T-cell (primary cell): ENCODE measurements at regions of chr11 and their contacts with region 1.

Region 1: GRCh38 chr11:96389720-96390487 is at the starts of genes CCDC82 and JRKL:
- DNase-seq: peak; percentile 94 to 99 (median 97)
- ATAC-seq: peak; percentile 94 to 99 (median 97)
- H3K4me3 ChIP-seq: peak within 1 kb of the TSS; percentile 68 to 88
- H3K4me3 Mint-ChIP-seq: peak within 1 kb of the TSS; percentile 91 to 94 (median 93)
- H3K27ac ChIP-seq: peak within 1 kb of the TSS; percentile 68
- H3K27ac Mint-ChIP-seq: peak within 1 kb of the TSS; percentile 88 to 91
- H3K4me1 ChIP-seq: peaks cover 7 to 15% of the 10 kb centered on the region in 2 experiments
- H3K4me1 Mint-ChIP-seq: peaks cover 43 to 56% (median 53%) of the 10 kb centered on the region in 3 donors
- H3K27me3 ChIP-seq: no peaks in the 10 kb centered on the region
- H3K27me3 Mint-ChIP-seq: no peaks in the 10 kb centered on the region
- total RNA-seq, gene CCDC82: 28.9 to 37.1 (median 33.5) TPM
- total RNA-seq, gene JRKL: 4.8 to 15.6 (median 12.3) TPM

Region 2: GRCh38 chr11:95483339-95483738 is 906.6 kb before region 1 on chr11:
- CTCF ChIA-PET with region 1: no interaction called
- POLR2A ChIA-PET with region 1: no interaction called
- DNase-seq: no peak
- ATAC-seq: no peak
- H3K4me3 ChIP-seq: no peak overlapping the region
- H3K4me3 Mint-ChIP-seq: no peak overlapping the region
- H3K27ac ChIP-seq: no peak overlapping the region
- H3K27ac Mint-ChIP-seq: no peak overlapping the region
- H3K4me1 ChIP-seq: no peaks in the 10 kb centered on the region
- H3K4me1 Mint-ChIP-seq: no peaks in the 10 kb centered on the region
- H3K27me3 ChIP-seq: no peaks in the 10 kb centered on the region
- H3K27me3 Mint-ChIP-seq: no peaks in the 10 kb centered on the region

Region 3: GRCh38 chr11:95835768-95836488 is 554.0 kb before region 1 on chr11:
- CTCF ChIA-PET with region 1: interaction called, 20 to 67 read pairs
- POLR2A ChIA-PET with region 1: interaction called in 1 of 2 experiments, 3 read pairs
- DNase-seq: peak; percentile 9 to 70 (median 46)
- ATAC-seq: peak; percentile 82 to 88 (median 86)
- H3K4me3 ChIP-seq: no peak overlapping the region
- H3K4me3 Mint-ChIP-seq: no peak overlapping the region
- H3K27ac ChIP-seq: no peak overlapping the region
- H3K27ac Mint-ChIP-seq: no peak overlapping the region
- H3K4me1 ChIP-seq: no peaks in the 10 kb centered on the region
- H3K4me1 Mint-ChIP-seq: no peaks in the 10 kb centered on the region
- H3K27me3 ChIP-seq: no peaks in the 10 kb centered on the region
- H3K27me3 Mint-ChIP-seq: no peaks in the 10 kb centered on the region

Region 4: GRCh38 chr11:95922536-95923438 is 467.1 kb before region 1 on chr11:
- CTCF ChIA-PET with region 1: no interaction called
- POLR2A ChIA-PET with region 1: interaction called in 1 of 2 experiments, 10 read pairs
- DNase-seq: peak in 1 of 35 experiments; percentile 8
- ATAC-seq: no peak
- H3K4me3 ChIP-seq: peak overlapping the region; percentile 81 to 96
- H3K4me3 Mint-ChIP-seq: peak overlapping the region; percentile 87 to 97 (median 92)
- H3K27ac ChIP-seq: peak overlapping the region; percentile 84
- H3K27ac Mint-ChIP-seq: peak overlapping the region; percentile 88 to 98
- H3K4me1 ChIP-seq: peaks cover 0 to 2% of the 10 kb centered on the region in 2 experiments
- H3K4me1 Mint-ChIP-seq: peaks cover 25 to 35% (median 28%) of the 10 kb centered on the region in 3 donors
- H3K27me3 ChIP-seq: peaks cover 0 to 3% of the 10 kb centered on the region in 2 experiments
- H3K27me3 Mint-ChIP-seq: peaks cover 0 to 9% of the 10 kb centered on the region in 2 donors

Region 5: GRCh38 chr11:96054870-96055705 is 334.8 kb before region 1 on chr11:
- CTCF ChIA-PET with region 1: interaction called, 5 to 19 read pairs
- POLR2A ChIA-PET with region 1: no interaction called
- DNase-seq: peak in 1 of 35 experiments; percentile 53
- ATAC-seq: peak; percentile 43 to 64 (median 52)
- H3K4me3 ChIP-seq: no peak overlapping the region
- H3K4me3 Mint-ChIP-seq: no peak overlapping the region
- H3K27ac ChIP-seq: no peak overlapping the region
- H3K27ac Mint-ChIP-seq: peak overlapping the region; percentile 69 to 76
- H3K4me1 ChIP-seq: peaks cover 0 to 5% of the 10 kb centered on the region in 2 experiments
- H3K4me1 Mint-ChIP-seq: peaks cover 58 to 67% (median 62%) of the 10 kb centered on the region in 3 donors
- H3K27me3 ChIP-seq: no peaks in the 10 kb centered on the region
- H3K27me3 Mint-ChIP-seq: no peaks in the 10 kb centered on the region

Region 6: GRCh38 chr11:96287822-96288439 is 102.0 kb before region 1 on chr11:
- CTCF ChIA-PET with region 1: no interaction called
- POLR2A ChIA-PET with region 1: no interaction called
- DNase-seq: no peak
- ATAC-seq: no peak
- H3K4me3 ChIP-seq: no peak overlapping the region
- H3K4me3 Mint-ChIP-seq: peak overlapping the region in 1 of 3 donors; percentile 43
- H3K27ac ChIP-seq: no peak overlapping the region
- H3K27ac Mint-ChIP-seq: peak overlapping the region in 1 of 2 donors; percentile 20
- H3K4me1 ChIP-seq: peaks cover 3 to 28% of the 10 kb centered on the region in 2 experiments
- H3K4me1 Mint-ChIP-seq: peaks cover 80 to 82% (median 81%) of the 10 kb centered on the region in 3 donors
- H3K27me3 ChIP-seq: no peaks in the 10 kb centered on the region
- H3K27me3 Mint-ChIP-seq: no peaks in the 10 kb centered on the region